ENCODE measurements at regions of chr16 and their contacts with region 1.

Region 1: GRCh38 chr16:3023669-3024478 is at the starts of genes HCFC1R1 and THOC6:
- DNase-seq: peak; percentile 96
- ATAC-seq: peak; percentile 35
- H3K4me3 ChIP-seq: peak within 1 kb of the TSS; percentile 94
- H3K27ac ChIP-seq: peak within 1 kb of the TSS; percentile 100
- H3K4me1 ChIP-seq: peaks cover 23% of the 10 kb centered on the region
- H3K27me3 ChIP-seq: no peaks in the 10 kb centered on the region
- CTCF ChIP-seq: no peak
- total RNA-seq, gene HCFC1R1: 56.4 and 56.6 TPM in 2 replicates
- total RNA-seq, gene THOC6: 40.3 and 47.3 TPM in 2 replicates

Region 2: GRCh38 chr16:2500918-2501750 is 522.7 kb before region 1 on chr16:
- CTCF ChIA-PET with region 1: interaction called, 12 read pairs
- POLR2A ChIA-PET with region 1: no interaction called
- intact Hi-C with region 1: no loop called
- DNase-seq: peak; percentile 59
- ATAC-seq: peak; percentile 88
- H3K4me3 ChIP-seq: no peak overlapping the region
- H3K27ac ChIP-seq: no peak overlapping the region
- H3K4me1 ChIP-seq: no peaks in the 10 kb centered on the region
- H3K27me3 ChIP-seq: no peaks in the 10 kb centered on the region
- CTCF ChIP-seq: peak; percentile 87

Region 3: DNA sequence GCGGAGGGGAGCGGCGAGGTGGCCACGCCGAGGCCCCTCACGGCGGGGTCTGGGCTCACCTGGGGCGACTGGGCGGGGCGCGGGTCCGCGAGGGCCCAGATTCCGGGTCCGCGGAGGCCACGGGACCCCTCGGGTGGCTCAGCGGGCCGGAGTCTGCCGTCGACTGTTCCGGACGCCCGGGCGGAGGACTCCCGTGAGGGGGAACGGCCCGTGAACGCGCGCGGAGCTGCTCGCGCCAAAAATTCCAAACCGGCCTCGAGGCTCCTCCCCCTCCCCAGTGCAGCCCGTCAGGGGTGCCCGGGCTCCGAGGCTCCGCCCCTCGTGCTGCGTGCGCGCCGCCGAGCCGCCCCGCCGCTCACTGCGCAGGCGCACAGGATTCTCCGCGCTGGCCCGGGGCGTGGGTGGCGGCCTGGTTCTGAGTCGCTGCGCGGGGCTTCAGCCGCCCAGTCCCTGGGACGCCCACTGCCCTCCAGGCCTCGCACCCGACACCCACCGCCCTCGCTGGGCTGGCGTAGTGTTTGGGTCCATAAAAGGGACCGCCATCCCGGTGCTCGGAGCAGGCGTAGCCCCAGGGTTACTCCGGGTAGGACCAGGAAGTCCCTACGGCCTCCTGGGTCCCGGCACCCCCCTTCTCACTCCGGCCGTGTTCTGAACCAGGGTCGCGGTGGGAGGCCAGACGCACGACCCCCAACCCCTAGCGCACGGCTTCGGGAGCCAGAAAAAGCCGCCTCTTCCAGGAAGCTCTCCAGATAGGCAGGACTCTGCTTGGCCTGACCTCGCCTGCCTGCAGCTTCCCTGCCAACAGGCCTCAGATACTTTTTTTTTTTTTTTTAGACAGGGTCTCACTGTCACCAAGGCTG is 43.4 kb before region 1 on chr16 and contains the start of gene PKMYT1:
- CTCF ChIA-PET with region 1: no interaction called
- POLR2A ChIA-PET with region 1: no interaction called
- intact Hi-C with region 1: loop called (anchors 1 kb)
- DNase-seq: peak; percentile 88
- ATAC-seq: peak; percentile 71
- H3K4me3 ChIP-seq: peak within 1 kb of the TSS; percentile 93
- H3K27ac ChIP-seq: peak within 1 kb of the TSS; percentile 65
- H3K4me1 ChIP-seq: peaks cover 19% of the 10 kb centered on the region
- H3K27me3 ChIP-seq: no peaks in the 10 kb centered on the region
- CTCF ChIP-seq: no peak
- total RNA-seq, gene PKMYT1: 51.9 and 109 TPM in 2 replicates

Region 4: DNA sequence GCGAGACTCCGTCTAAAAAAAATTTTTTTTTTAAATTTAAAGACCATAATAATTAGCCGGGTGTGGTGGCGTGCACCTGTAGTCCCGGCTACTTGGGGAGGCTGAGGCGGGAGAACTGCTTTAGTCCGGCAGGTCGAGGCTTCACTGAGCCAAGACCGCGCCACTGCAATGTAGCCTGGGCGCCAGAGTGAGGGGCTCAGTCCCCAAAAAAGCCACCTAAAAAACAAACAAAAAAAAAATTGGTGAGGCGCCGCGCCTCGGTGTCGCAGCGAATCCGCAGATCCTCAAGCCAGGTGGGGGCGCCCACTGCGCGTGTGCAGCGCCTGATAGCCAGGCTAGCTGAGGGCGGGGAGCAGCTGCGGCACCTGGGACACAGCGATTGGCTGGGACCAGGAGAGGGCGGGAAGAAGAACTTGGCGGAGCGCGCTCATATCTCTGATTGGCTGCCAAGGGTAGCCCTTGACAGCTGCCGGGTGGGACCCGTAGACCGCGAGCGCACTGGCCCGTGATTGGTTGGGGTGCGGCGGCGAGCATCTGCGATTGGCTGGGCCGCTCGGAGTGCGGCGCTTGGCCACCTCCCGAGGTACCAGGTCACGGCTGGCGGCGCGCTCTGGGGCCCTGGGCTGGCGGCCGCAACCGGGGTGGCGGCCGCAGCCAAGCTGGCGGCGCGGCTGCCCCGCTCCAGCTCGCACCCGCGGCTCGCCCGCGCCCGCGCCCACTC is 20.1 kb before region 1 on chr16:
- CTCF ChIA-PET with region 1: interaction called, 14 read pairs
- POLR2A ChIA-PET with region 1: interaction called, 18 read pairs
- intact Hi-C with region 1: loop called (anchors 2 kb)
- DNase-seq: peak; percentile 97
- ATAC-seq: peak; percentile 96
- H3K4me3 ChIP-seq: peak overlapping the region; percentile 59
- H3K27ac ChIP-seq: no peak overlapping the region
- H3K4me1 ChIP-seq: peaks cover 8% of the 10 kb centered on the region
- H3K27me3 ChIP-seq: no peaks in the 10 kb centered on the region
- CTCF ChIP-seq: peak; percentile 62

Region 5: DNA sequence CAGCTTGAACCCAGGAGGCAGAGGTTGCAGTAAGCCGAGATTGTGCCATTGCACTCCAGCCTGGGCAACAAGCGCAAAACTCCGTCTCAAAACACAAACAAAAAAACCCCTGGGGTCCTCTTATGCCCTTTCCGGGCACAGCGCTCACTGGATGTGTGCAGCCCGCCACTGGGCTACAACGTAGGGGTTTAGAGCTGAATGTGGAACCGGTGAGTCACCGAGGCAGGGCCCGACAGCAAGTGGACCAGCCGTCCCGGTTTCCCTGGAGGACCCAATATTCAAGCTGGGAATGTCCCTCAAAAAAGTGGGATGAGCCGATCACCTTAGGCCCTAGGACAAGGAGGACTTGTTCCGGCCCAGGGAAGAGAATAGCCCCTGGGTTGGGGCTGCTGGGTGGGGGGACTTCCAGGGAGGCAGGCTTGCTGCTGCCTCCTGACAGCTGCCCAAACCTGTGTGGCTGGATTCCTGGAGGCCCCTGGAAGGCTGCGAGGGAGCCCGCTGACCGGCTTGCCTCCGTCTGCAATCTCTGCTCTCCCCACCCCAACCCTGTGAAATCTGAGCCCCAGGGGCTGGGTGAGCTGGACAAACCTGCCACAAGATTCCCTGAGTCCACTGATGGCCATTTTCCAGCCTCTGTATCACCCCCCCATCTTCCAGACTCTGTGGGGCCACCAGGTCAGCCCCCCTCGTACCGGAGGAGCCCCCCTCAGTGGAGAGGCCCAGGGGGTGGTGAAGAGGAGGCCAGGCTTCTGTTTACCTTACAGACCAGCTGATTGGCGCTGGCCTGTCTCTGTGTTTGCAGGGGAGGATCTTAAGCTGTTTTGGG is 14.1 kb before region 1 on chr16:
- CTCF ChIA-PET with region 1: interaction called, 6 read pairs
- POLR2A ChIA-PET with region 1: interaction called, 18 read pairs
- intact Hi-C with region 1: loop called (anchors 2 kb)
- DNase-seq: peak; percentile 88
- ATAC-seq: peak; percentile 77
- H3K4me3 ChIP-seq: peak overlapping the region; percentile 53; the same call in 1 of the 2 replicates
- H3K27ac ChIP-seq: peak overlapping the region; percentile 75
- H3K4me1 ChIP-seq: peaks cover 37% of the 10 kb centered on the region
- H3K27me3 ChIP-seq: no peaks in the 10 kb centered on the region
- CTCF ChIP-seq: no peak

Region 6: DNA sequence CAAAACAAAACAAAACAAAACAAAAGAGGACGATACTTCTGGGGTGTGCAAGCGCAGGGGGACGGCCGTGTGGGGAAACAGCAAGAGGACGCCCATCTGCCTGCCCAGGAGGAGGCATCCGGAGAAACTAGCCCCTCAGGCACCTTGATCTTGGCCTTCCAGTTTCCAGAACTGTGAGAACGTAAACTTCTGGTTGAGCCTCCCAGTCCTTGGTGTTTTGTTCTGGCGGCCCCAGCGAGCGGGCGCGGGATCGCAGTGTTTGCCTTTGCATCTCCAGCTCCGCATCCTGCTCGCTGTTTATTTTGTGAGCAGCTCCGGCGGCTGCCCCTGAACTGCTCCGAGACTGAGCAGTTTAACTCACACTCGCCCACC is 21.5 kb after region 1 on chr16:
- CTCF ChIA-PET with region 1: no interaction called
- POLR2A ChIA-PET with region 1: no interaction called
- intact Hi-C with region 1: no loop called
- DNase-seq: peak; percentile 45
- ATAC-seq: peak; percentile 70
- H3K4me3 ChIP-seq: peak overlapping the region; percentile 74
- H3K27ac ChIP-seq: no peak overlapping the region
- H3K4me1 ChIP-seq: no peaks in the 10 kb centered on the region
- H3K27me3 ChIP-seq: peaks cover 3% of the 10 kb centered on the region; the same call in 1 of the 2 replicates
- CTCF ChIP-seq: no peak

Region 7: DNA sequence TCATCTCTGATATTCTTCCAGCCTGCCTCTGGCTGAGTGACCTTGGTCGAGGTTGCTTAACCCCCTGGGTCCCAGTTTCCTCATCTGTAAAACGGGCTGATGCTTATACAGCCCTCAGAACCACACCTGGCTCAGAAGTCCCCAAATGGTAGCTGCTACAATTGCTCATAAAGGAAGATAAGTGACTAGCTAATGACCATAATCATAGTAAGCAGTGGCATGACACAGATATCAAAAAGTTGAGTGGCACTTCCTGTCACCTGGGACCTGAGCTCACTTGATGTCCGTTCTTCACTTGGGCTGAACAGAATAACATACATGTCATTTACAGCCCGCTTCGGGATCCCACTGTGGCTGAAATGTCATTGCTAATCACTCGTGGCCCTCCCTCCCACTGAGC is 1602.5 kb after region 1 on chr16:
- CTCF ChIA-PET with region 1: no interaction called
- POLR2A ChIA-PET with region 1: interaction called, 14 read pairs
- intact Hi-C with region 1: no loop called
- DNase-seq: no peak
- ATAC-seq: no peak
- H3K4me3 ChIP-seq: peak overlapping the region; percentile 93
- H3K27ac ChIP-seq: no peak overlapping the region
- H3K4me1 ChIP-seq: peaks cover 13% of the 10 kb centered on the region
- H3K27me3 ChIP-seq: no peaks in the 10 kb centered on the region
- CTCF ChIP-seq: no peak

Region 8: GRCh38 chr16:4926928-4927327 is 1903.1 kb after region 1 on chr16:
- CTCF ChIA-PET with region 1: interaction called, 12 read pairs
- POLR2A ChIA-PET with region 1: no interaction called
- intact Hi-C with region 1: no loop called
- DNase-seq: no peak
- ATAC-seq: no peak
- H3K4me3 ChIP-seq: no peak overlapping the region
- H3K27ac ChIP-seq: no peak overlapping the region
- H3K4me1 ChIP-seq: peaks cover 19% of the 10 kb centered on the region
- H3K27me3 ChIP-seq: no peaks in the 10 kb centered on the region
- CTCF ChIP-seq: no peak

Measured in PC-3 (cell line).